ENCODE measurements at regions of chr17 and their contacts with region 1.

Region 1: DNA sequence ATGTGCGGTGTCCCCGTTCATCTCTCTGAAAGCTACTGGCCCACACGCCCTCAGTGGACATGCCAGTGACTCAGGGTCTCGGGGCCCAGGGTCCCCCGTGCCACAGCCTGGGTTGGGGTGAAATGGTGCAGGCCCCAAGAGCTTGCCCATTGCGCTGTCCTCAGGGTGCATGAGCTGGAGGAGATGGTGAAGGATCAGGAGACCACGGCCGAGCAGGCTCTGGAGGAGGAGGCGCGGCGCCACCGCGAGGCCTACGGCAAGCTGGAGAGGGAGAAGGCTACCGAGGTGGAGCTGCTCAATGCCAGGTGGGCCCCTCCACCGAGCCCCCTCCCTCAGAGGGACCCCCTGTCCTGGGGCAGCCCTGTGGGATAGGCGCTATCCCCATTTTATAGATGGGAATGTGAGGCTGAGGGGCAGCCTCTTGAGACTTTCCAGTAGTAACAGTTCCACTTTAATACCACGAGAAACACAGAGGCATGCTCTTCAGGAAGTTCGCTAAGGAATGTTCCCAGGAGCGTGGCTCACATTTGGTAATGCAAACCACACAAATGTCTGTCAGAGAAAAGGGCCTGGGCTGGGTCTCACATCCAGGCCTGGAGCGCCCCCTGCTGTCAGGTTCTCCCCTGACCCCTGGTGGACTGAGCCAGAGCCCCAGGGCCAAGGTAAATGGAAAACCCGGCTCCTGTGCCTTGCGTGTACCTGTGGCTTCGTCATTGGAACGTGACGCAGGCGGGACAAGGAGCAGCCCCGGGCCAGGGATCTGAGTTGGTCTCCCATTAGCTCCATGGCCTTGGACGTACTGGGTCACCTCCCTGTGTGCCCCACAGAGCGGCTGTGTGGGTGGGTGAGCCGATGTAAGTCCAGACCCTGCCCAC is 133.7 kb downstream of the RAB11FIP4 start:
- DNase-seq: peak; percentile 77 to 99
- H3K4me3 ChIP-seq: no peak overlapping the region
- H3K27ac ChIP-seq: no peak overlapping the region
- H3K4me1 ChIP-seq: no peaks in the 10 kb centered on the region; a peak in 3 of 7 replicates
- H3K27me3 ChIP-seq: no peaks in the 10 kb centered on the region
- CTCF ChIP-seq: peak; percentile 80 to 99 (median 91)
- EP300 ChIP-seq: no peak
- POLR2A ChIP-seq: no peak
- RAD21 ChIP-seq: peak; percentile 97 to 99

Region 2: GRCh38 chr17:31413874-31414549 is 111.2 kb before region 1 on chr17:
- CTCF ChIA-PET with region 1: interaction called, 11 read pairs
- POLR2A ChIA-PET with region 1: no interaction called
- DNase-seq: no peak
- H3K4me3 ChIP-seq: no peak overlapping the region
- H3K27ac ChIP-seq: no peak overlapping the region
- H3K4me1 ChIP-seq: peaks cover 2 to 27% (median 10%) of the 10 kb centered on the region in 4 experiments
- H3K27me3 ChIP-seq: no peaks in the 10 kb centered on the region
- CTCF ChIP-seq: no peak
- EP300 ChIP-seq: no peak
- POLR2A ChIP-seq: no peak
- RAD21 ChIP-seq: no peak

Region 3: DNA sequence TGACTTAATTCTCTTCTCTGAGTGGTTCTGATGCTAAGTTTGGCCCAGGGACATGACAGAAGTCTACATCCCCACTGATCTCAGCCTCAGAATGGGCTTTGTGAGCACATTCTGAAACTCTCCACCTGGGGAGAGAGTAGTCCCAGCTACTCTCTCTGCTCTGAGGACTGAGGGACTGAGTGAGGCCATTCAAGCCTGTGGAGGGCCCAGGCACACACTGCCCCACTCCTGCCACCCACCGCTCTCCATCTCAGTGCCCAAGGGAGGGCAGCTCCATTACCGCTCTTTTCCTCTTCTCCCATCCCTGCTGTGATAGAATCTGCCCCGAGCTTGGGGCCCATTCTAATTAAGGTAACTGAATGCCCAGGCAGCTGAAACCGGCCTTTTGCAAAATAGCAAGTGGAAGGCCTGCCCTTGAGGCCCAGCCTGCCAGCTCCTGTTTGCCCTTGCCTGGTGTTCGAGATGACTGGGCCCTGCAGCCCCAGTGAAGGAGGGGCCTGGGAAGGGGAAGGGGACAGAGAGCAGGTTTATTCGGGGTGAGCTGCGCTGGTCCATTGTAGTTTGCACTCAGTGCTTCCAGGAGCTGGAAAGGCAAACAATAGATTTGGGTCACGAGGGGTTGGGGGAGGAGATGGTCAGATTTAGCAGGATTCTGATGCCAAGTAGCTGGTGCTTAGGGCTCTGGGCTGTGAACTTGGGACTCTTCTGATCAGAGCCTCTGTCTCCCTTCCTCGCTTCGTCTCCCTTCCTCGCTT is 57.5 kb before region 1 on chr17:
- CTCF ChIA-PET with region 1: interaction called, 13 read pairs
- POLR2A ChIA-PET with region 1: no interaction called
- DNase-seq: peak in 1 of 2 experiments; percentile 58
- H3K4me3 ChIP-seq: no peak overlapping the region
- H3K27ac ChIP-seq: peak overlapping the region; percentile 52; the same call in 1 of the 2 replicates
- H3K4me1 ChIP-seq: peaks cover 9 to 34% (median 19%) of the 10 kb centered on the region in 4 experiments
- H3K27me3 ChIP-seq: no peaks in the 10 kb centered on the region
- CTCF ChIP-seq: no peak
- EP300 ChIP-seq: no peak
- POLR2A ChIP-seq: no peak
- RAD21 ChIP-seq: no peak

Region 4: GRCh38 chr17:31541559-31541958 is 16.4 kb after region 1 on chr17:
- CTCF ChIA-PET with region 1: interaction called, 10 read pairs
- POLR2A ChIA-PET with region 1: no interaction called
- DNase-seq: peak in 1 of 2 experiments; percentile 48
- H3K4me3 ChIP-seq: no peak overlapping the region
- H3K27ac ChIP-seq: no peak overlapping the region
- H3K4me1 ChIP-seq: no peaks in the 10 kb centered on the region
- H3K27me3 ChIP-seq: no peaks in the 10 kb centered on the region
- CTCF ChIP-seq: peak in 2 of 3 experiments; percentile 46 to 52; a peak in 2 of 4 replicates
- EP300 ChIP-seq: no peak
- POLR2A ChIP-seq: no peak
- RAD21 ChIP-seq: peak; percentile 31 to 45

Region 5: DNA sequence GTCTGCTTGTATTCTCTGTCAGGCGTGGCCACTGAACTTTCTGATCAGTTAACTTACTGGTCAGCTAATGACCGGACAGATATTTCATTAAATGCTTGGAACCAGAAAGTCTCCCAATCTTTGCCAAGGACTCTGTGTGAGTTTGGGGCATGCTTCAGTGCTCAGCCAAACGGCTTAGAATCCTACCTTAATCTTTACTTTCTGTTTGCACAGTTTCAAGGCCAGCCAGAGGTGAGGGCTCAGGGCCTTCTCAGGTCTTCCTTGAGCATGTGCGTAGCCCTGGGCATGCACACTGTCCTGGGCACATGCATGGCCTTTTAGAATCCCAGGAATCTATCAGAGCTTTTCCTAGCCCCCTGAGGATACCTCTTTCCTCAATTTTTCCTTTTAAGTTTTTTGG is 96.4 kb after region 1 on chr17:
- CTCF ChIA-PET with region 1: no interaction called
- POLR2A ChIA-PET with region 1: no interaction called
- DNase-seq: no peak
- H3K4me3 ChIP-seq: no peak overlapping the region
- H3K27ac ChIP-seq: no peak overlapping the region
- H3K4me1 ChIP-seq: no peaks in the 10 kb centered on the region
- H3K27me3 ChIP-seq: no peaks in the 10 kb centered on the region
- CTCF ChIP-seq: no peak
- EP300 ChIP-seq: no peak
- POLR2A ChIP-seq: no peak
- RAD21 ChIP-seq: no peak

Measured in H1 (cell line).